Endothelial cell of umbilical vein (primary cell): ENCODE measurements at regions of chr1 and their contacts with region 1.

Region 1: GRCh38 chr1:184792450-184792969 is 37.9 kb upstream of the EDEM3 start:
- DNase-seq: peak; percentile 90
- H3K4me3 ChIP-seq: no peak overlapping the region
- H3K27ac ChIP-seq: peak overlapping the region; percentile 96
- H3K4me1 ChIP-seq: peaks cover 22% of the 10 kb centered on the region
- H3K27me3 ChIP-seq: no peaks in the 10 kb centered on the region
- CTCF ChIP-seq: no peak
- POLR2A ChIP-seq: no peak

Region 2: DNA sequence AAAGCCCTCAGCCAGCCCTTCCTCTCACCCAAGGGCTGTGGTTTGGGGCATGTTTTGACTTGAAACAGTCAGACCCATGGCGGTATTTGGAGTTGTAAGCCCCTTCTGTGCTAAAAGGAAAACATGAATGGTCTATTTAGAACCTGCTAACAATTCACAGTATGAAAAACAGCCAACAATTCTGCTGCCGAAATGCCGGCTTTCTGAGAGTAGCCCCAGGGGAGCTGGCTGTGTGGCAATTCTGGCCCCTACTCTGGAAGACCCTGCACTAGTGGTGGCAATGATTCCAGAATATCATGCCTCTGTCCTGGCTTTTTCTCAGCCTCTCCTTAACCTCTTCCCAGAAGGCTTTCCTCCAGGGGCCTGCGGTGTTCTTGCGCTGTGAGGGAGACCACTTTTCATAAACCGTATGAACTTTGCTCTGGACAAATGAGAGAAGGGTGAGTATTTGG is 156.5 kb before region 1 on chr1:
- CTCF ChIA-PET with region 1: no interaction called
- POLR2A ChIA-PET with region 1: no interaction called
- dilution Hi-C with region 1: no loop called
- intact Hi-C with region 1: no loop called
- DNase-seq: no peak
- H3K4me3 ChIP-seq: no peak overlapping the region
- H3K27ac ChIP-seq: no peak overlapping the region
- H3K4me1 ChIP-seq: no peaks in the 10 kb centered on the region
- H3K27me3 ChIP-seq: no peaks in the 10 kb centered on the region
- CTCF ChIP-seq: no peak
- POLR2A ChIP-seq: no peak

Region 3: GRCh38 chr1:184691719-184692324 is 100.7 kb before region 1 on chr1:
- CTCF ChIA-PET with region 1: no interaction called
- POLR2A ChIA-PET with region 1: no interaction called
- dilution Hi-C with region 1: no loop called
- intact Hi-C with region 1: no loop called
- DNase-seq: peak; percentile 67
- H3K4me3 ChIP-seq: no peak overlapping the region
- H3K27ac ChIP-seq: no peak overlapping the region
- H3K4me1 ChIP-seq: no peaks in the 10 kb centered on the region
- H3K27me3 ChIP-seq: no peaks in the 10 kb centered on the region
- CTCF ChIP-seq: peak; percentile 52 to 61
- POLR2A ChIP-seq: no peak

Region 4: GRCh38 chr1:184754476-184755225 is 37.9 kb before region 1 on chr1 and contains the start of gene EDEM3:
- CTCF ChIA-PET with region 1: interaction called, 9 read pairs
- POLR2A ChIA-PET with region 1: no interaction called
- dilution Hi-C with region 1: no loop called
- intact Hi-C with region 1: loop called (anchors 1 kb)
- DNase-seq: peak; percentile 99
- H3K4me3 ChIP-seq: peak within 1 kb of the TSS; percentile 59 to 83 (median 81)
- H3K27ac ChIP-seq: peak within 1 kb of the TSS; percentile 76
- H3K4me1 ChIP-seq: peaks cover 16% of the 10 kb centered on the region
- H3K27me3 ChIP-seq: peaks cover 0 to 3% of the 10 kb centered on the region in 2 experiments
- CTCF ChIP-seq: no peak
- POLR2A ChIP-seq: peak; percentile 93
- total RNA-seq, gene EDEM3: 26.3 and 33.5 TPM in 2 replicates

Region 5: GRCh38 chr1:184843732-184844495 is 51.4 kb after region 1 on chr1:
- CTCF ChIA-PET with region 1: no interaction called
- POLR2A ChIA-PET with region 1: no interaction called
- dilution Hi-C with region 1: no loop called
- intact Hi-C with region 1: no loop called
- DNase-seq: no peak
- H3K4me3 ChIP-seq: no peak overlapping the region
- H3K27ac ChIP-seq: no peak overlapping the region
- H3K4me1 ChIP-seq: no peaks in the 10 kb centered on the region
- H3K27me3 ChIP-seq: no peaks in the 10 kb centered on the region
- CTCF ChIP-seq: no peak
- POLR2A ChIP-seq: no peak